ENCODE measurements at regions of chr9 and their contacts with region 1.

Region 1: DNA sequence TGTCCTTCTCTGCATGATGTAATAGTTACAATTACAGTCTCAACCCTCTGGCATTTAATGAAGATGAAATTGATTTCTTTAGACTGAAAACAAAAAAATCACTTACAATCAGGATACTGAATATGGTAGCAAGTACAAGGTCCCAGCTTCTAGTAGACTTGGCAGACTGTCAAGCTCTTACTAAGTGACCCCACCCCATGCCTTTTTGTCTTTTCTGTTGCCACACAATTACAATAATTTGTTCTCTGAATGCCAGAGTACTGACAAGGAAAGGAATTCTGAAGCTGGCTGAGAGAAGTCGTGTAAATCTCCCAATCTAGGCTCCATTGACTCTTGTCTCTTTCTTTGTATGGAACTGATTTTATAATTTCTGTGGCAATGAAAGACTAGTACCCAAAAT is 154.2 kb downstream of the TMC1 start:
- DNase-seq: peak in 1 of 7 donors; percentile 3
- H3K4me3 ChIP-seq: no peak overlapping the region
- H3K27ac ChIP-seq: no peak overlapping the region
- H3K4me1 ChIP-seq: no peaks in the 10 kb centered on the region
- H3K27me3 ChIP-seq: no peaks in the 10 kb centered on the region
- CTCF ChIP-seq: no peak
- POLR2A ChIP-seq: no peak

Region 2: DNA sequence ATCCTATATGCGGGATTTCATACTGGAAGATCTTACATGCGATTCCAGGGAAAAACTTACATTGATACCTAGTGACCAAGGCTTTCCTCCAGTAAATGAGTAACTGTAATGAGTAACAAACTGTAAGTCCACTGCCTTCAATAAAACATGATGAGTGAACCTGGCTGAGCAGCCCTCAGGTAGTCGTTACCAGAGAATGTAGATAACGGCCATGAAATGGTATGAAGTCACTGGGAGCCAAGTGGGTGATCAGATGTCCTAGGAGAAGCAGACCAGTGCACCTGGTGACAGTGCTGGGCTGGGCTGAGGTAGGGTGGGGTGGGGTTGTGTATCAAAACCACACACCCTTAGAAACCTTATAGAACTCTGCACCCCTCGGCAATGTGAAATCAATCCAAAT is 73.7 kb after region 1 on chr9:
- intact Hi-C with region 1: loop called in 1 of 2 experiments (anchors 10 kb)
- DNase-seq: no peak
- H3K4me3 ChIP-seq: no peak overlapping the region
- H3K27ac ChIP-seq: no peak overlapping the region
- H3K4me1 ChIP-seq: no peaks in the 10 kb centered on the region
- H3K27me3 ChIP-seq: no peaks in the 10 kb centered on the region
- CTCF ChIP-seq: no peak
- POLR2A ChIP-seq: no peak